Aorta (tissue), 5 donors: ENCODE measurements at regions of chr20 and their contacts with region 1.

Region 1: DNA sequence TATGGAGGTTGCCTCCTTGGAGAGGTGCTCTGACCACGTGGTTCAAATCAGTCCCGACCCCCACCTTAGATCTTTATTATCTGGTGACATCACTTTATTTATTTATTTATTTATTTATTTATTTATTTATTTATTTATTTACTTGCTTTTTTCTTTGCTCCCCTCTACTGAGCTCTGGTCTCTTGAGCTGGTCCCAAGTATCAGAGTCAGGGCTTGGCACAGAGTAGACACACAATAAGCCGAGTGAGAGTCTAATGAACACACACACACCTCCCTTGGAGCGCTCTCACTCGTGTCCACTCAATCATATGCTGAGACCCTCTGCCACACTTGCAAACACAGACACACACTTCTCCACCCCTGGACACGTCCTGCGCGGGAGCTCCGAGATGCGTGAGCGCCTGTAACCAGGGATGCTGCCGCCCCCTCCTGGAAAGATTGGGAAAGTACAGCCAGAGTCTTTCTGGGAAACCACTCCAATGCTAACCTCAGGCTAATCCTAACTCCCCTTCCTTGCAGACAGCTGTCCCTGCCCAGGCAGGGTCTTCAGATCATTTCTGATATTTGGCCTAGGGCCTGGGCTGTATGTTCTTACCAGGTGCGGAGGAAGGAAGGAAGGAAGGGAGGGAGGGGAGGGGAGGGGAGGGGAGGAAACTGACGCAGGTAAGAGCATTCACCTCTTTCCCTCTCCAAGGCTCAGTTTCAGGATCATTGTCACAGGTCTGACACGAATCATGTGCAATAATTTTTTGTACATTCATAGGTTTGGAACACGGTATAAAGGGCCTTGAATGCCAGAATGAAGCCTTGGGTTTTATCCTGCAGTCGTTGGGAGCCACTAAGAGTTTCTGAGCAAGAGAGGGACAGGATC is 70.9 kb downstream of the STK35 start:
- DNase-seq: peak; percentile 76 to 90
- ATAC-seq: peak; percentile 87
- H3K4me3 ChIP-seq: no peak overlapping the region
- H3K27ac ChIP-seq: no peak overlapping the region
- H3K4me1 ChIP-seq: no peaks in the 10 kb centered on the region
- H3K27me3 ChIP-seq: no peaks in the 10 kb centered on the region

Region 2: DNA sequence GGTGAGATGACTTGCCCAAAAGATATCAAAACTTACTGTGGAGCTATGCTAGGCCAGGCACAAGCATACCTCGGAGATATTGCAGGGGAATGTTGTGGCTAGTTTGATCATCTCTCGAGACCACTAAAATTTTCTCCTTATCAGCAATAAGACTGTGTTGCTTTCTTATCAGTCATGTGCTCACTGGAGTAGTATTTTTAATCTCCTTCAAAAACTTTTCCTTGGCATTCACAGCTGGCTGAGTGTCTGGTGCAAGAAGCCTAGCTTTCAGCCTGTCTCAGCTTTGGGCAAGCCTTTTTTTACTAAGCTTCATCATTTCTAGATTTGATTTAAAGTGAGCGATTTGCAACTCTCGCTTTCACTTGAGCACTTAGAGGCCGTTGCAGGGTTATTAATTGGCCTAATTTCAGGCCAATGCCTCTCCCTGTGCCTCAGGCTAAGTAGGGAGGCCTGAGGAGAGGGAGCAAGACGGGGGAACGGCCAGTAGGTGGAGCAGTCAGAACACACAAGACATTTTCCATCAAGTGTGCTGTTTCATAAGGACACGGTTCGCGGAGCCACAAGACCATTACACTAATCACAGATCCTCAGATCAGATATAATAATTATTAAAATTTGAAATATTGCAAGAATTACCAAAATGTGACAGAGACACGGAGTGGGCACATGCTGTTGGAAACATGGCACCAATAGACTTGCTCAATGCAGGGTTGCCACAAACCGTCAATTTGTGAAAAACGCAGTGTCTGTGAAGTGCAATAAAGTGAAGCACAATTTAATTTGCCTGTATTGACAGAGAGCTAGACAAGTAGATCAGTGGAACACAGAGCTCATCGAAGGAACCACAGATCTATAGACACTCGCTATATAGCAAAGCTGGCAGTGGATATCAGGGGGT is 408.2 kb before region 1 on chr20:
- intact Hi-C with region 1: loop called (anchors 5 kb)
- DNase-seq: peak; percentile 86 to 88
- ATAC-seq: peak; percentile 85
- H3K4me3 ChIP-seq: no peak overlapping the region
- H3K27ac ChIP-seq: no peak overlapping the region
- H3K4me1 ChIP-seq: no peaks in the 10 kb centered on the region
- H3K27me3 ChIP-seq: no peaks in the 10 kb centered on the region

Region 3: GRCh38 chr20:1827974-1828785 is 344.4 kb before region 1 on chr20:
- intact Hi-C with region 1: no loop called
- DNase-seq: peak in 1 of 2 donors; percentile 77
- ATAC-seq: peak; percentile 17
- H3K4me3 ChIP-seq: no peak overlapping the region
- H3K27ac ChIP-seq: no peak overlapping the region
- H3K4me1 ChIP-seq: no peaks in the 10 kb centered on the region
- H3K27me3 ChIP-seq: no peaks in the 10 kb centered on the region

Region 4: GRCh38 chr20:1965520-1966351 is 206.8 kb before region 1 on chr20:
- intact Hi-C with region 1: loop called (anchors 2 kb)
- DNase-seq: peak; percentile 77 to 94
- ATAC-seq: peak; percentile 84
- H3K4me3 ChIP-seq: no peak overlapping the region
- H3K27ac ChIP-seq: no peak overlapping the region
- H3K4me1 ChIP-seq: no peaks in the 10 kb centered on the region
- H3K27me3 ChIP-seq: no peaks in the 10 kb centered on the region